ENCODE measurements at regions of chr22 and their contacts with region 1.

Region 1: DNA sequence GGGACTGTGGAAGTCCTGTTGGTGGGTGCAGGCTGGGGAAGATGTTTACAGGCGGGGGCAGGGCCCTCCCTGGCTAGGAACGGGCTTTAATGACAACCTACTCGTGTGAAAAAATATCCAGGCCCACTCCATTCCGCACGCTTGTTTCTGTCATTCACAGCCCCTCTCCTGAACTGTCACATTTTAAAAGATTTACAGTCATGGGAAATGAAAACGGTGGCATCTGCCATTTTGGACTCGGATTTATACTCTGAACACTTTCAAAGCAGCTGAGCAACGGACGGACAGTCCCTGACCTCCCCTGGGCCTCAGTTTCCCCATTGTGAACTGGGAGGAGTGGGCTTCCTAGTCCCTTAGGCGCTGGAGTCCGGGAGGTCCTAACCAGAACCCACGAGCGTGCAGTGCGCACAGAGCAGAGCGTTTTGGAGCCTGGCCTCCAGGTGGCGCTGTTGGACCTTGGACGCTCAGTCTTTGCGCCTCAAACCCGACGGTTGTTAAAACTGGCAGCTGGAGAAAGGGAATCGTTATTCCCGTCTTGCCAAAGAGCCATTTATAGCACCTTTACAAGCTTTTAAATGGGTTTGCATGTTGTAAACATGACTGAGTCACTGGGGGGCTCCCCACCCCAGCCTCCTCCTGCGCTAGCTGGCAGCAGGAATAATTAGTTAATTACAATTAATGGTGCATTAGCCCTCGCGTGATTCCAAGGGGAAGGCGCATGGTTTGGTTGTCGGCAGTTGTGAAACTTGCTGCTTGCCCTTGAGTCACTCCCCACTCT is 75.3 kb downstream of the FBLN1 start:
- DNase-seq: peak; percentile 47 to 64
- ATAC-seq: peak; percentile 83 to 86
- H3K4me3 ChIP-seq: no peak overlapping the region
- H3K27ac ChIP-seq: no peak overlapping the region
- H3K4me1 ChIP-seq: no peaks in the 10 kb centered on the region
- H3K27me3 ChIP-seq: peaks cover 0 to 13% (median 6%) of the 10 kb centered on the region in 3 donors
- CTCF ChIP-seq: peak; percentile 78 to 95 (median 91)
- POLR2A ChIP-seq: no peak

Region 2: DNA sequence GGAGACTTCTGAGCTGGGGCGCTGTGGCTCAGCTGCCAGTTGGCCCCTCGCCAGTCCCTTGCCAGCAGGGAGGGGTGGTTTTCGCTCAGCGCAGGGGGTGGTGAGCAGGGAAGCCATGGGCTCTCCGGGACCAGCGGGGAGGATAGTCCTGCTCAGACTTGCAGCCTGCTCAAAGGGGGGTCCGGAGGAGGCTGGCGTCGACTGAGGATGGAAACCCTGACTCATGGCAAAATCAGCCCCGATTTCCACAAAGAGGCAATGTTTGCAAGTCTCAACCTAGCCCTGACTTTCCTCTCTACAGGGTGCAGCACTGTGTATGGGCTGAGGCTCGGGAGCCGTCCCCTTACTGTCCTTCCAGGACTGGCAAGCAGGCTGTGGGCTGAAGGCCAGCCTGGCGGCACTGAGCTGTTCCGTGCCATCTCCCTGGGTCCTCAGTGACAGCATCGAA is 40.2 kb before region 1 on chr22:
- in situ Hi-C with region 1: no loop called
- intact Hi-C with region 1: no loop called
- DNase-seq: no peak
- ATAC-seq: peak; percentile 42 to 57
- H3K4me3 ChIP-seq: peak overlapping the region in 1 of 4 donors; percentile 7
- H3K27ac ChIP-seq: peak overlapping the region in 2 of 4 donors; percentile 2 to 14
- H3K4me1 ChIP-seq: peaks cover 5 to 11% of the 10 kb centered on the region in 2 donors
- H3K27me3 ChIP-seq: peaks cover 0 to 3% (median 0%) of the 10 kb centered on the region in 3 donors
- CTCF ChIP-seq: no peak
- POLR2A ChIP-seq: no peak

Region 3: GRCh38 chr22:45638834-45639746 is 61.2 kb after region 1 on chr22:
- in situ Hi-C with region 1: loop called in 2 of 4 experiments (anchors 5 to 10 kb)
- intact Hi-C with region 1: no loop called
- DNase-seq: peak in 1 of 2 donors; percentile 41
- ATAC-seq: no peak
- H3K4me3 ChIP-seq: no peak overlapping the region
- H3K27ac ChIP-seq: no peak overlapping the region
- H3K4me1 ChIP-seq: no peaks in the 10 kb centered on the region
- H3K27me3 ChIP-seq: no peaks in the 10 kb centered on the region
- CTCF ChIP-seq: no peak
- POLR2A ChIP-seq: no peak

Region 4: GRCh38 chr22:45863981-45864751 is 286.2 kb after region 1 on chr22:
- in situ Hi-C with region 1: no loop called
- intact Hi-C with region 1: loop called (anchors 5 kb)
- DNase-seq: peak in 1 of 2 donors; percentile 35
- ATAC-seq: peak; percentile 37 to 65
- H3K4me3 ChIP-seq: no peak overlapping the region
- H3K27ac ChIP-seq: no peak overlapping the region
- H3K4me1 ChIP-seq: peaks cover 0 to 9% of the 10 kb centered on the region in 2 donors
- H3K27me3 ChIP-seq: peaks cover 31 to 33% (median 32%) of the 10 kb centered on the region in 3 donors
- CTCF ChIP-seq: peak; percentile 55 to 91 (median 87)
- POLR2A ChIP-seq: no peak